Panc1 (cell line): ENCODE measurements at regions of chr12 and their contacts with region 1.

Region 1: GRCh38 chr12:105793421-105793820 is 345.3 kb downstream of the NUAK1 start:
- DNase-seq: no peak
- ATAC-seq: no peak
- H3K4me3 ChIP-seq: no peak overlapping the region
- H3K27ac ChIP-seq: no peak overlapping the region
- H3K4me1 ChIP-seq: no peaks in the 10 kb centered on the region
- H3K27me3 ChIP-seq: no peaks in the 10 kb centered on the region
- CTCF ChIP-seq: no peak

Region 2: GRCh38 chr12:105721051-105721825 is 72.2 kb before region 1 on chr12:
- CTCF ChIA-PET with region 1: no interaction called
- POLR2A ChIA-PET with region 1: no interaction called
- in situ Hi-C with region 1: no loop called
- intact Hi-C with region 1: no loop called
- DNase-seq: no peak
- ATAC-seq: no peak
- H3K4me3 ChIP-seq: no peak overlapping the region
- H3K27ac ChIP-seq: no peak overlapping the region
- H3K4me1 ChIP-seq: no peaks in the 10 kb centered on the region
- H3K27me3 ChIP-seq: no peaks in the 10 kb centered on the region; the same call in 1 of the 2 replicates
- CTCF ChIP-seq: no peak

Region 3: DNA sequence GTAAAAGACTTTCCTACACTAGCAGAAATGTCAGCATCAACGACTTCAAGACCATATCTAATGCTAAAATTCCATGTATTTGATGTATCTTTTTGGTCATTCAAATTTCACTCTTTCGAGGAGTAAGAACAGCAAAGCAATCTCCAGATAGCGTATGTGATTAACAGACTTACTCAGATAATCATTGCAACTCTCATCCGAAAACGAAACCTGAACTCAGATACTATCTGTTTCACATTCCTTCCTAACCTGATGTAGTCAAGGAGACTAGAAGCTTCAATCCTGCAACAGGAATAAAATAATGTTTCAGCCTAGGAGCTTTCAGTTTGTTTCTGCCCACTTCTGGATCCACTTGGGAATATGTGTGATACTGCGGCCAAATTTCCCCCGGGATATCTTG is 59.1 kb after region 1 on chr12:
- CTCF ChIA-PET with region 1: interaction called, 10 read pairs
- POLR2A ChIA-PET with region 1: no interaction called
- in situ Hi-C with region 1: no loop called
- intact Hi-C with region 1: no loop called
- DNase-seq: no peak
- ATAC-seq: no peak
- H3K4me3 ChIP-seq: no peak overlapping the region
- H3K27ac ChIP-seq: no peak overlapping the region
- H3K4me1 ChIP-seq: no peaks in the 10 kb centered on the region
- H3K27me3 ChIP-seq: no peaks in the 10 kb centered on the region
- CTCF ChIP-seq: no peak